ENCODE measurements at regions of chr14 and their contacts with region 1.

Region 1: DNA sequence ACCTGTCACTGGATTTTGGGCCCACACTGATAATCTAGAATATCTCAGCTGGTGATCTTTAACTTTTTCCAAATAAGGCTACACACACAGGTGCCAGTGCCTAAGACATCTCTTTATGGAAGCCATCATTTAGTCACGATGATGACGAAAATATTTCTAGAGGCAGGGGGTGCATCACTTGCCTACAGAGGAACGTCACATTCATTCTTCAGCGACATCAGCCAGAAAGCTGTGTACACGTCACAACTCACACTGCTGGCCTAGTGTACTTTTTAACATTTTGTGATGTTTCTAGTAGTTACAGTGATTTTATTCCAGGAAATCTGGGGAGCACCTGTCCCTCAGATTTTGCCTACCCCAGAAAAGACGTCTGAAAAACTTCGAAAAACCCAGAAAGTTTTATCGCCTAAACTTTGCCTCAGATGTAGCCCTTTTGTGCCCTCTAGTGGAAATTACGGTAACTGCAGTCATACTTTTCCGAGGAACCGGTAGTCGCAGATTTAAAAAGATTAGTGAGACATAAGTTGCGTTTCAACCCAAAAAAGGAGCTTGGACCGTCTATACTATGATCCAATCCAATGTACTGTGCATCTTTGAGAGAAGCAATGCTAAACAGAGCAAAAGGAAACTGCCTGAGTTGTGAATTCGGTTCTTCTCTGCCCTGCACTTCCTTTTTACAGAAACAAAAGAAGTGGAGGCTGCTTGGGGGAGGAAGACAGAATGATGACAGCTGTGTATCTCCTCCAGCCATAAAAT is 64.3 kb upstream of the STON2 start:
- DNase-seq: peak; percentile 81
- H3K4me3 ChIP-seq: peak overlapping the region; percentile 55
- H3K27ac ChIP-seq: peak overlapping the region; percentile 86
- H3K4me1 ChIP-seq: peaks cover 55% of the 10 kb centered on the region
- CTCF ChIP-seq: peak; percentile 99

Region 2: GRCh38 chr14:81269100-81269978 is 195.1 kb before region 1 on chr14:
- CTCF ChIA-PET with region 1: interaction called, 5 read pairs
- POLR2A ChIA-PET with region 1: interaction called, 5 read pairs
- intact Hi-C with region 1: loop called (anchors 1 kb)
- DNase-seq: peak; percentile 71
- H3K4me3 ChIP-seq: no peak overlapping the region
- H3K27ac ChIP-seq: no peak overlapping the region
- H3K4me1 ChIP-seq: peaks cover 26% of the 10 kb centered on the region
- CTCF ChIP-seq: peak; percentile 94

Region 3: DNA sequence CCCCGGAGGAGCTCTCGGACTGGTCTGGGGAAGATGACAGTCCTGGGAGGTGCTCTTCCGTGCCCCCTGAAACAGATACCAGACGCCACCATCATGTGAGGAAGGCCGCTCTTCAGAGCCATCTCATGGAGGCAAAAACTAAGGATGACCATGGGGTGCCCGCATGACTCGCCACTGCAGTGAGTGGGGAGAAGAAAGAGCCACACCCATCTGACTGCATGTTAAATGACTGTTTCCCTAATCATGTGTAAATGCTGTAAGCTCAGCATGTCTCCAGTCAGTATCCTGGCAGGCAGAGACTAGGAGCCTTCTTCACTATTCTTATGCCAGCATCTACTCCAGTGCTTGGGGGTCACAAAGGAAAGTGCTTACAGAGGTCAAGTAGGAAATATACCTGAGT is 68.3 kb before region 1 on chr14:
- CTCF ChIA-PET with region 1: no interaction called
- POLR2A ChIA-PET with region 1: no interaction called
- intact Hi-C with region 1: no loop called
- DNase-seq: no peak
- H3K4me3 ChIP-seq: no peak overlapping the region
- H3K27ac ChIP-seq: no peak overlapping the region
- H3K4me1 ChIP-seq: no peaks in the 10 kb centered on the region
- CTCF ChIP-seq: no peak

Region 4: DNA sequence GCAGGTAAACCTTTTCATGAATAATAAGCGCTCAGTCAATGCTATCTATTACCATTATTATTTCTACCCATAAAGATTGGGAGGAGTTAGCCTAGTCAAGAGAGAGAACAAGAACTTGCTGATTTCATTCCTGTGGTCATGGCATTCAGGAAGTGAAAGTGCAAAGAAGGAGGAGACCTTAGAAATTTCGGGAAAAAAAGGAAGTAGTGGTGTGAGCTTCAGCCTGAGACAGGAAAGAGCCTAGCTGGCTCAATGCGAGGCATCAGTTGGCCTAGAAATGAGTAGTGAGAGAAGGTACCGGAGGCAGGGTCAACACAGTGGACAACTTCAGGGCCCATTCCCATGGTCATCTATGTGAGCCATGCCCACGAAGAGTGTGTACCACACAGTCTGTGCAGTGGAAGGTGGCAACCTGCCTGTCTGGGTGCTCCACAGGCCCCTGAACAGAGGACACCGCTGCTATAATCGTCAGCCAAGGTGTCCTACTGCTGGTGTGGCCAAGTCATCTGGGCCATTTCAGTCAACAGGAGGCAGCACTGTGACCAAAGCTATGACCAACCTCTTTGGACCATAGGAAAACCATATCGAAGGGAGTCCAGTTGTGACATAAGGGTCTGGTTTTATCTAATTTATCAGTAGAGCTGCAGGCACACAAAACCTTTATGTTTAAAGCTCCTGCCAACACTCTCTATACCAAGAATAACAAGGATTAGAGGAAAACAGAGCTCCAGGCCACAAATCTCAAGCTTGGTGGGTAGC is 48.1 kb before region 1 on chr14:
- CTCF ChIA-PET with region 1: no interaction called
- POLR2A ChIA-PET with region 1: no interaction called
- intact Hi-C with region 1: no loop called
- DNase-seq: no peak
- H3K4me3 ChIP-seq: no peak overlapping the region
- H3K27ac ChIP-seq: no peak overlapping the region
- H3K4me1 ChIP-seq: no peaks in the 10 kb centered on the region
- CTCF ChIP-seq: no peak

Region 5: GRCh38 chr14:81638656-81639280 is 174.3 kb after region 1 on chr14:
- CTCF ChIA-PET with region 1: no interaction called
- POLR2A ChIA-PET with region 1: interaction called, 11 read pairs
- intact Hi-C with region 1: no loop called
- DNase-seq: no peak
- H3K4me3 ChIP-seq: no peak overlapping the region
- H3K27ac ChIP-seq: no peak overlapping the region
- H3K4me1 ChIP-seq: no peaks in the 10 kb centered on the region
- CTCF ChIP-seq: no peak

Region 6: DNA sequence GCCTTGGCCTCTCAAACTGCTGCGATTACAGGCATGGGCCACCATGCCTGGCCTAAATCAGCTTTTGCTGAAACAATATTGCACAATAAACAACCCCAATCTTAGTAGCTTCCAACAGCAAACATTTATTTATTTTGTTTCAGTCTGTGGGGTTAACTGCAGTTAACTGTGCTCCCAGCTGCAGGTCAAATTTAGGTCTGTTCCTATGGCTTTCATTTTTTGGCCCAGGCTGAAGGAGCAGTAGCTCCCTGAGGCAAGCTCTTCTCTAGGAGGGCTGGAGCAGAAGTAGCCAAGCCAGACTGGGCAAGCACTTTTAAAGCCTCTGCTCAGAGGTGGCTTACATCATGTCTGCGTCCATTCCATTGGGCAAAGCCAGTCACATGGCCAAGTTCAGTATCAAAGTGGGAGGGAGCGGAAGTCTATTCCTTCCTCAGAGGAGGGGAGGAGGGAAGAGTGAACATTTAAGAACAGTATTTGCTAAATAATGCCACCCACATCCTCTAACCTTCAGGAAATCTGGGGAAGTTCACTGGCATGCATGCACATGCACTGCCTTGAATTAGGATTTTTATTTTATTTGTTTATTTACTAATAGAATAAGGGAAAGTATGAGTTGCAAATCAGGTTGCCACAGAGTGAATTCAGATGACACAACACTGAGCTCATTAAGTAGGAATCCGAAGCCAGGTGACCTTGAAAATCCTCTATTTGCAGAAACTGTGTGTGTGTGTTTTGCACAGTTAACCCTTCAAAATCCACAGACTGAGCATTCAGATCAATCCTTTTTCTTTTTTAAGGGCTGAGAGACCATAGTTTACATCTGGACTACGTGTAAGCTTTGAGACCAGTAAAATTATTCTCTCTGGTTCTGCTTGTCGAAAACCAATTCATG is 191.2 kb after region 1 on chr14:
- CTCF ChIA-PET with region 1: no interaction called
- POLR2A ChIA-PET with region 1: no interaction called
- intact Hi-C with region 1: no loop called
- DNase-seq: peak; percentile 10
- H3K4me3 ChIP-seq: no peak overlapping the region
- H3K27ac ChIP-seq: no peak overlapping the region
- H3K4me1 ChIP-seq: no peaks in the 10 kb centered on the region
- CTCF ChIP-seq: no peak

Region 7: DNA sequence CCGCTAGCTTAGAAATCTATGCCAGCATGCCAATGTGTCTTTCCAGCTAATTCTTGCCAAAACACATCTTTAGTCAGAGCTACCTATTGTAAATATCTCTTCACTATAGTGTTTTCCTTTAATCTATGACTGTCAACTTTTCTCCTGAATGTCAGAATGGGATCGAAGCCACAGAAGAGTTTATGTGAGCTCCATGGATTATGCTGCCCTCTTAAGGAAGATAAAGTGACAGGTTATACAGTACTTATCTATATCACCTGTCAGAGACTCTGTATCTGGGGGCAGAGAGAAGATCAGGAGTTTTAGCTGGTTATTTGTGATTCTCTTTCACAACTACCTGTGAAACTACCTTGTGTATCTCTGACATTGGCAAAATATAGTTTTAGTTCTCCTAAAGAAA is 273.5 kb after region 1 on chr14:
- CTCF ChIA-PET with region 1: no interaction called
- POLR2A ChIA-PET with region 1: no interaction called
- intact Hi-C with region 1: no loop called
- DNase-seq: no peak
- H3K4me3 ChIP-seq: no peak overlapping the region
- H3K27ac ChIP-seq: no peak overlapping the region
- H3K4me1 ChIP-seq: no peaks in the 10 kb centered on the region
- CTCF ChIP-seq: no peak

Measured in OCI-LY7 (cell line).